CD8-positive, alpha-beta T cell (primary cell): ENCODE measurements at regions of chr5 and their contacts with region 1.

Region 1: GRCh38 chr5:43008369-43009153 is 31.6 kb downstream of the ANXA2R start:
- DNase-seq: peak; percentile 86 to 97 (median 93)
- ATAC-seq: peak; percentile 63
- H3K4me3 ChIP-seq: peak overlapping the region; percentile 70 to 81
- H3K4me3 Mint-ChIP-seq: peak overlapping the region; percentile 98
- H3K27ac ChIP-seq: peak overlapping the region; percentile 94 to 96
- H3K27ac Mint-ChIP-seq: peak overlapping the region; percentile 96
- H3K4me1 ChIP-seq: peaks cover 25% of the 10 kb centered on the region
- H3K4me1 Mint-ChIP-seq: peaks cover 34% of the 10 kb centered on the region
- H3K27me3 ChIP-seq: no peaks in the 10 kb centered on the region
- H3K27me3 Mint-ChIP-seq: no peaks in the 10 kb centered on the region
- CTCF ChIP-seq: no peak

Region 2: GRCh38 chr5:42870882-42871418 is 137.6 kb before region 1 on chr5:
- CTCF ChIA-PET with region 1: no interaction called
- POLR2A ChIA-PET with region 1: no interaction called
- intact Hi-C with region 1: no loop called
- DNase-seq: no peak
- ATAC-seq: no peak
- H3K4me3 ChIP-seq: no peak overlapping the region
- H3K4me3 Mint-ChIP-seq: no peak overlapping the region
- H3K27ac ChIP-seq: no peak overlapping the region
- H3K27ac Mint-ChIP-seq: no peak overlapping the region
- H3K4me1 ChIP-seq: peaks cover 5% of the 10 kb centered on the region
- H3K4me1 Mint-ChIP-seq: peaks cover 3% of the 10 kb centered on the region
- H3K27me3 ChIP-seq: no peaks in the 10 kb centered on the region
- H3K27me3 Mint-ChIP-seq: peaks cover 19% of the 10 kb centered on the region
- CTCF ChIP-seq: no peak

Region 3: DNA sequence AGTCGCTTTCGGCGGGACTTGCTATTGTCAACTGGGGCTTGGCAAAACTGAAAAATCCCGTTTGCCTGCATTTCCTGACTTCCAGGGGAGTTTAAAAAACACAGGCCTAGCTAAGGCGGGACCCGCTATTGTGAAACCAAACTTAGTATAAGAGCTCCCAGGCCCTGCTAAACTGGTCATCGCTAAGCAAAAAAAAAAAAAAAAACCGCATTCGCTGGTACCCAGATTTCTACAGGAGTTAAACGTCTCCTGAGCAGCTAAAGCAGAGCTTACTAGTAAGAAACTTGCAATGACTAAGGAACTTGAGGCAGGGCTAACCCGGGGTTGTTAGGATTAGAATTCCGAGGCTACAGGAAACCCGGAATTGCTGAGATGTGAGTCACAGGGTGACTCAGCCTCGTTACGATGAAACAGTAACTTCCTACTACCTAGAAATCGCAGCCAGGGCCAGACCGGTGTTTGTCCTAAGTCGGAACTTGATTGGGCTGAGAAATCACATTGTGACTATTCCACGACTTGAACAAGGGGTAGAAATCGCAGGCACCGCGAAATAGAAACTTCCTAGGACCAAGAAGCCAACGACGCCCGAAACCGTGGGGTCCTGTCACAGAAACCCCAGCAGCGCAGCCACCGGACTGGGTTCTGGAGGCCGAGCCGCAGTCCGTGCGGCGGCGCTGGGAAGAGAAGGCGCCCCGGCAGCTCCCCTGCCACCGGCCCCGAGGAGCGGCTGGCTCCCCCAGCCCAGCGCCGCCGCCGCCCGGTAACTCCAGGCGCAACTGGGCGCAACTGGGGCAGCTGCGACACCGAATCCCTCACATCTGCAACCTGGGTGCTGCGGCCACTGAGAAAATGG is 57.9 kb before region 1 on chr5:
- CTCF ChIA-PET with region 1: interaction called, 26 read pairs
- POLR2A ChIA-PET with region 1: interaction called, 97 read pairs
- intact Hi-C with region 1: loop called in 1 of 2 experiments (anchors 1 kb)
- DNase-seq: peak; percentile 26 to 90 (median 72)
- ATAC-seq: peak; percentile 43
- H3K4me3 ChIP-seq: peak overlapping the region; percentile 72 to 83
- H3K4me3 Mint-ChIP-seq: peak overlapping the region; percentile 94
- H3K27ac ChIP-seq: peak overlapping the region; percentile 93 to 94
- H3K27ac Mint-ChIP-seq: peak overlapping the region; percentile 99
- H3K4me1 ChIP-seq: peaks cover 20% of the 10 kb centered on the region
- H3K4me1 Mint-ChIP-seq: peaks cover 34% of the 10 kb centered on the region
- H3K27me3 ChIP-seq: no peaks in the 10 kb centered on the region
- H3K27me3 Mint-ChIP-seq: no peaks in the 10 kb centered on the region
- CTCF ChIP-seq: no peak

Region 4: GRCh38 chr5:43019614-43020293 is 11.2 kb after region 1 on chr5:
- CTCF ChIA-PET with region 1: interaction called, 92 read pairs
- POLR2A ChIA-PET with region 1: interaction called, 492 read pairs
- intact Hi-C with region 1: loop called (anchors 1 kb)
- DNase-seq: peak; percentile 69 to 96 (median 84)
- ATAC-seq: peak; percentile 66
- H3K4me3 ChIP-seq: peak overlapping the region; percentile 70 to 73
- H3K4me3 Mint-ChIP-seq: peak overlapping the region; percentile 98
- H3K27ac ChIP-seq: peak overlapping the region; percentile 97 to 98
- H3K27ac Mint-ChIP-seq: peak overlapping the region; percentile 100
- H3K4me1 ChIP-seq: peaks cover 40% of the 10 kb centered on the region
- H3K4me1 Mint-ChIP-seq: peaks cover 43% of the 10 kb centered on the region
- H3K27me3 ChIP-seq: no peaks in the 10 kb centered on the region
- H3K27me3 Mint-ChIP-seq: no peaks in the 10 kb centered on the region
- CTCF ChIP-seq: peak; percentile 71

Region 5: GRCh38 chr5:43040287-43041098 is 31.9 kb after region 1 on chr5 and contains the start of gene ANXA2R:
- CTCF ChIA-PET with region 1: interaction called, 36 read pairs
- POLR2A ChIA-PET with region 1: interaction called, 283 read pairs
- intact Hi-C with region 1: loop called (anchors 1 kb)
- DNase-seq: peak; percentile 88 to 98 (median 93)
- ATAC-seq: peak; percentile 58
- H3K4me3 ChIP-seq: peak within 1 kb of the TSS; percentile 86 to 87
- H3K4me3 Mint-ChIP-seq: peak within 1 kb of the TSS; percentile 93
- H3K27ac ChIP-seq: peak within 1 kb of the TSS; percentile 93 to 94
- H3K27ac Mint-ChIP-seq: peak within 1 kb of the TSS; percentile 98
- H3K4me1 ChIP-seq: peaks cover 27% of the 10 kb centered on the region
- H3K4me1 Mint-ChIP-seq: peaks cover 56% of the 10 kb centered on the region
- H3K27me3 ChIP-seq: no peaks in the 10 kb centered on the region
- H3K27me3 Mint-ChIP-seq: no peaks in the 10 kb centered on the region
- CTCF ChIP-seq: peak; percentile 79
- total RNA-seq, gene ANXA2R: 38.2 to 39.5 TPM

Region 6: GRCh38 chr5:43602461-43603343 is 594.1 kb after region 1 on chr5 and contains the start of gene NNT:
- CTCF ChIA-PET with region 1: no interaction called
- POLR2A ChIA-PET with region 1: no interaction called
- intact Hi-C with region 1: loop called in 1 of 2 experiments (anchors 10 kb)
- DNase-seq: peak; percentile 46 to 87 (median 78)
- ATAC-seq: peak; percentile 71
- H3K4me3 ChIP-seq: peak within 1 kb of the TSS; percentile 95 to 98
- H3K4me3 Mint-ChIP-seq: peak within 1 kb of the TSS; percentile 89
- H3K27ac ChIP-seq: peak within 1 kb of the TSS; percentile 85 to 88
- H3K27ac Mint-ChIP-seq: peak within 1 kb of the TSS; percentile 92
- H3K4me1 ChIP-seq: peaks cover 14% of the 10 kb centered on the region
- H3K4me1 Mint-ChIP-seq: peaks cover 59% of the 10 kb centered on the region
- H3K27me3 ChIP-seq: no peaks in the 10 kb centered on the region
- H3K27me3 Mint-ChIP-seq: no peaks in the 10 kb centered on the region
- CTCF ChIP-seq: no peak
- total RNA-seq, gene NNT: 19.4 to 20.2 TPM